PC-9 (cell line): ENCODE measurements at regions of chr12 and their contacts with region 1.

Region 1: GRCh38 chr12:63802012-63802608 is 22.4 kb downstream of the RXYLT1 start:
- DNase-seq: no peak
- H3K4me3 ChIP-seq: no peak overlapping the region
- H3K27ac ChIP-seq: no peak overlapping the region
- H3K4me1 ChIP-seq: peaks cover 22% of the 10 kb centered on the region
- H3K27me3 ChIP-seq: no peaks in the 10 kb centered on the region
- CTCF ChIP-seq: peak; percentile 80

Region 2: DNA sequence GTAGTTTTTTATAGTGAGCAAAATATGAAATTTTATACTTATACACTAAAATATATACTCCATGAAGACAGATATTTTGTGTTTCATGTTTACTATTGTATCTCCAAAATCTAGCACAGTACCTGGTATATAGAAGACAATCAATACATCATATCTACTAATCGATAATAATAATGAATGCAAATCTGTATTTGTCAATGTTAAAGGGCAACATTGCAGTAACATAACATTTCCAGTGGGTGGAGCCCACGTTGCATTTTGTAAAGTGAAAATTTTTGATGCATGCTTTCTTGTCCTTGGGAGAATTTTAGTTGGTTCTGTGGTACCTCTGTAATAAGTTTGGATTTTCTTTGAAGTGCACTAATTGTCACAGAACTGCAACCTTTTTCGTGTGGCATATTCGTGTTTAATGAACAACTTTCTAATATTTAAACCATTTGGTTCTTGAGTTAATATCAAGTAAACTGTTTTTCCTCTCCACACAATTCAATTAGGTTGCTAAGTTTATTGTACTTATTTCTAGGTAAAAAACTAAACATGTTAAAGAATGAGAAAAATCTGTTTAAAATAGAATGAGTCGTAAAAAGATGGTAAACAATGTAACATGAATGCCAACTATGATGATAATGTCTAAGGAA is 698.5 kb before region 1 on chr12:
- CTCF ChIA-PET with region 1: interaction called, 3 read pairs
- POLR2A ChIA-PET with region 1: no interaction called
- intact Hi-C with region 1: loop called (anchors 1 kb)
- DNase-seq: no peak
- H3K4me3 ChIP-seq: no peak overlapping the region
- H3K27ac ChIP-seq: no peak overlapping the region
- H3K4me1 ChIP-seq: no peaks in the 10 kb centered on the region
- H3K27me3 ChIP-seq: no peaks in the 10 kb centered on the region
- CTCF ChIP-seq: peak; percentile 91

Region 3: GRCh38 chr12:63319336-63319735 is 482.8 kb before region 1 on chr12:
- CTCF ChIA-PET with region 1: no interaction called
- POLR2A ChIA-PET with region 1: no interaction called
- intact Hi-C with region 1: loop called (anchors 5 kb)
- DNase-seq: peak in 1 of 2 experiments; percentile 43
- H3K4me3 ChIP-seq: no peak overlapping the region
- H3K27ac ChIP-seq: no peak overlapping the region
- H3K4me1 ChIP-seq: no peaks in the 10 kb centered on the region
- H3K27me3 ChIP-seq: no peaks in the 10 kb centered on the region
- CTCF ChIP-seq: no peak

Region 4: DNA sequence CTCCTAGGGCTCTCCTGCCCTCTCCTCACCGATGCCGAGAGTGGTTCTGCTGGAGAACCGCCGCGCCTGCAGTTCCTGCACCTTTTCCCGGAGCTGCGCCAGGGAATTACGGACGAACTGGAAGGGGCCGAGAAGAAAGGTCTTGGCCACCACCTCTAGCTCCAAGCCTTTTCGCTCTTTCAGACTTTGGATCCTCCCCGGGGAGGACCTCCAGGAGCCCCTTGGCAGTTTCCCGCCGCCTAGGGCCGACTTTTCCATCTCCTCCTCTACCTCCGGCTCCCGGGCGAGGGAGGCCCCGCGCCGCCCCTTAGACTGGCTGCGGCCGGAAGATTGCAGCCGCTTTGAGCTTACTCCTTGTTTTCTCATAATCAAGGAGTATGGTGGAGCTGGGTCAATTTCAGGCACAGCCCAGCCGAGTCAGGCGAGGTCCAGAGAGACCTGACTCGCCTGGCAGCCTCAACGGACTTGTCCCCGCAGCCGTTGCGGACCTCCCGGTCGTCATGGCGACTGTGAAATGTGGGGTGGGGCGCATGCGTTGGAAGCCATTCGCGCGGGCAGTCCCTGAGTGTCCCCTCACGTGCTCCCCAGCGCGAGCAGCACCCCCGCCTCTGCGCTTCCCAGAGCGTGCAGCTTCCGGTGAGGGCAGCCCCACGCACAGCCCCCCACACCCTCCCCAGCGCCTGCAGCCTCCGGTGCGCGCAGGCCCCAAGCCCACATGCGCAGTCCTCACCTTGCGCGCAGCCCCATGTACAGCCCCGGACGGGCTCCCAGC is 133.9 kb before region 1 on chr12 and contains the start of gene DPY19L2:
- CTCF ChIA-PET with region 1: no interaction called
- POLR2A ChIA-PET with region 1: no interaction called
- intact Hi-C with region 1: loop called (anchors 5 kb)
- DNase-seq: peak in 1 of 2 experiments; percentile 22
- H3K4me3 ChIP-seq: no peak within 1 kb of the TSS
- H3K27ac ChIP-seq: no peak within 1 kb of the TSS
- H3K4me1 ChIP-seq: 0 out of 2 replicates have a peak, but pooled peaks cover 4% of the 10 kb centered on the region
- H3K27me3 ChIP-seq: no peaks in the 10 kb centered on the region
- CTCF ChIP-seq: no peak
- total RNA-seq, gene DPY19L2: not detected in 2 replicates

Region 5: DNA sequence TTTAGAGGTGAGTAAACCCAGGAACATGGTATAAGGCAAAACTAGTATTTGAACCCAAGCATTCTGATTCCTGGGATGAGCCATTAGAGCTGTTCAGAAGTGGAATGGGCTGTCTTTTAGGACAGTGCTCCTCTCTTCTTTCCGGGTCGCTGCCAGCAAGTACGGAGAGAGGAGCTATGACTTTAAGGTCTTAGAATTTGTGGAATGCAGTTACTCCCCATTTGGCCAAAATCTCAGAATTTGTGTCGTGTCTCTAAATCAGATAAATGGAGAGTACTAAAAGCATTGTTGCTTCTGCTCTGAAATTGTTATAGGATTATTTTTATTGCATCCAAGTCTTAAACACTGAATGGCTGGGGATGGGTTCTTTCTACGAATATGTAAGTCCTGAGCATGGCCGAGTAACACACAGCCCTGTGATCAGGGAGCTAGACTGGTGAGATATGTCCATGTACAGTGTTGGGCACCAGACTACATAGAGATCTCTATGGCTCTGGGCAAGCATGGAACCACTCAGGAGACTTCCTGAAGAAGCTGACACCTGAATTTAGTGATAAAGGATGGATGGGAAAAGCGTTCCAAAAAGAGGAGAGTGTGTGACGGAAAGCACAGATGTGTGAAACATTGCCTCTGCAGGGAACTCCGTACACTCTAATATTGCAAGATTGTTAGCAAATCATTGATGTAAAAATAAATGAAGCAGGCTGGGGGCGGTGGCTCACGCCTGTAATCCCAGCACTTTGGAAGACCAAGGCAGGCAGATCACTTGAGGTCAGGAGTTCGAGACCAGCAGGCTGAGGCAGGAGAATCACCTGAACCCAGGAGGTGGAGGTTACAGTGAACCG is 227.1 kb after region 1 on chr12:
- CTCF ChIA-PET with region 1: no interaction called
- POLR2A ChIA-PET with region 1: no interaction called
- intact Hi-C with region 1: no loop called
- DNase-seq: no peak
- H3K4me3 ChIP-seq: no peak overlapping the region
- H3K27ac ChIP-seq: no peak overlapping the region
- H3K4me1 ChIP-seq: no peaks in the 10 kb centered on the region
- H3K27me3 ChIP-seq: no peaks in the 10 kb centered on the region
- CTCF ChIP-seq: no peak